ENCODE measurements at regions of chr2 and their contacts with region 1.

Region 1: GRCh38 chr2:71510196-71510807 is 56.9 kb downstream of the DYSF start:
- DNase-seq: no peak
- H3K4me3 ChIP-seq: no peak overlapping the region
- H3K27ac ChIP-seq: no peak overlapping the region
- H3K4me1 ChIP-seq: peaks cover 5 to 13% (median 10%) of the 10 kb centered on the region in 4 donors
- H3K27me3 ChIP-seq: no peaks in the 10 kb centered on the region
- CTCF ChIP-seq: peak; percentile 88 to 99 (median 96)
- EP300 ChIP-seq: no peak
- POLR2A ChIP-seq: no peak

Region 2: GRCh38 chr2:71299507-71299906 is 210.8 kb before region 1 on chr2:
- intact Hi-C with region 1: loop called (anchors 2 kb)
- DNase-seq: no peak
- H3K4me3 ChIP-seq: no peak overlapping the region
- H3K27ac ChIP-seq: no peak overlapping the region
- H3K4me1 ChIP-seq: no peaks in the 10 kb centered on the region
- H3K27me3 ChIP-seq: no peaks in the 10 kb centered on the region
- CTCF ChIP-seq: peak; percentile 65 to 79 (median 76)
- EP300 ChIP-seq: no peak
- POLR2A ChIP-seq: no peak

Region 3: GRCh38 chr2:71460595-71461303 is 49.6 kb before region 1 on chr2:
- intact Hi-C with region 1: loop called (anchors 1 kb)
- DNase-seq: peak; percentile 81
- H3K4me3 ChIP-seq: no peak overlapping the region
- H3K27ac ChIP-seq: no peak overlapping the region
- H3K4me1 ChIP-seq: peaks cover 55 to 70% (median 66%) of the 10 kb centered on the region in 4 donors
- H3K27me3 ChIP-seq: peaks cover 0 to 2% (median 0%) of the 10 kb centered on the region in 4 donors
- CTCF ChIP-seq: peak; percentile 28 to 58 (median 50)
- EP300 ChIP-seq: no peak
- POLR2A ChIP-seq: no peak